ENCODE measurements at regions of chr3 and their contacts with region 1.

Region 1: DNA sequence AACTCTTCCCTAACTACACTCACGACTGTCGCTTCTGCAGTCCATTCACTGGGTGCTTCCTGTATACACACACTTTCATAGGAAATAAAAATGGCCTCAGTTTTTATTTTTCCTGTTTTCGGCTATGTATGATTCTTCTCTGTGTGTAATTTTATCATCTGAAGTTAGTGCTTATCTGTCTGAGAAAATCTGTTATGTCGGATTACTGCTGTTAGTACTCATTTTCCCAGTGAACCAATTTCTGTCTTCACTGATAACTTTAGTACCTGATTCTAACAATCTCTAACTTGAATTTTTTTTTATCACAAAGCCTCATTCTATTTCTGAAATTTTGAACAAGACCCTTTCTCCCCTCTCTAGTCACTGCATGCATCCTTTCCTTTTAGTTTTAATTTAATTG is 20.9 kb downstream of the RAB5A start:
- DNase-seq: no peak
- ATAC-seq: peak; percentile 30
- H3K4me3 ChIP-seq: no peak overlapping the region
- H3K27ac ChIP-seq: peak overlapping the region; percentile 11; the same call in 1 of the 3 replicates
- H3K4me1 ChIP-seq: peaks cover 6 to 12% of the 10 kb centered on the region in 2 experiments; a peak in 4 of 5 replicates
- H3K27me3 ChIP-seq: no peaks in the 10 kb centered on the region
- CTCF ChIP-seq: no peak
- EP300 ChIP-seq: peak; percentile 48; the same call in 1 of the 2 replicates
- POLR2A ChIP-seq: no peak
- RAD21 ChIP-seq: no peak

Region 2: GRCh38 chr3:19547665-19548464 is 419.9 kb before region 1 on chr3:
- CTCF ChIA-PET with region 1: no interaction called
- POLR2A ChIA-PET with region 1: no interaction called
- in situ Hi-C with region 1: no loop called
- intact Hi-C with region 1: no loop called
- DNase-seq: no peak
- ATAC-seq: no peak
- H3K4me3 ChIP-seq: no peak overlapping the region
- H3K27ac ChIP-seq: no peak overlapping the region
- H3K4me1 ChIP-seq: no peaks in the 10 kb centered on the region
- H3K27me3 ChIP-seq: no peaks in the 10 kb centered on the region
- CTCF ChIP-seq: no peak
- EP300 ChIP-seq: no peak
- POLR2A ChIP-seq: no peak
- RAD21 ChIP-seq: no peak

Region 3: GRCh38 chr3:19725000-19725399 is 242.8 kb before region 1 on chr3:
- CTCF ChIA-PET with region 1: no interaction called
- POLR2A ChIA-PET with region 1: no interaction called
- in situ Hi-C with region 1: no loop called
- intact Hi-C with region 1: no loop called
- DNase-seq: no peak
- ATAC-seq: no peak
- H3K4me3 ChIP-seq: no peak overlapping the region
- H3K27ac ChIP-seq: no peak overlapping the region
- H3K4me1 ChIP-seq: no peaks in the 10 kb centered on the region
- H3K27me3 ChIP-seq: no peaks in the 10 kb centered on the region
- CTCF ChIP-seq: no peak
- EP300 ChIP-seq: no peak
- POLR2A ChIP-seq: no peak
- RAD21 ChIP-seq: no peak

Region 4: GRCh38 chr3:19954676-19955075 is 13.1 kb before region 1 on chr3:
- CTCF ChIA-PET with region 1: no interaction called
- POLR2A ChIA-PET with region 1: interaction called, 24 read pairs
- in situ Hi-C with region 1: no loop called
- intact Hi-C with region 1: no loop called
- DNase-seq: no peak
- ATAC-seq: no peak
- H3K4me3 ChIP-seq: no peak overlapping the region
- H3K27ac ChIP-seq: no peak overlapping the region
- H3K4me1 ChIP-seq: peaks cover under 1 to 5% of the 10 kb centered on the region in 2 experiments; a peak in 1 of 5 replicates
- H3K27me3 ChIP-seq: no peaks in the 10 kb centered on the region
- CTCF ChIP-seq: no peak
- EP300 ChIP-seq: no peak
- POLR2A ChIP-seq: no peak
- RAD21 ChIP-seq: no peak